CD8-positive, alpha-beta T cell (primary cell): ENCODE measurements at regions of chr13 and their contacts with region 1.

Region 1: GRCh38 chr13:37241786-37242185 is 136.3 kb upstream of the CSNK1A1L start:
- DNase-seq: no peak
- ATAC-seq: no peak
- H3K4me3 ChIP-seq: no peak overlapping the region
- H3K4me3 Mint-ChIP-seq: no peak overlapping the region
- H3K27ac ChIP-seq: no peak overlapping the region
- H3K27ac Mint-ChIP-seq: no peak overlapping the region
- H3K4me1 ChIP-seq: no peaks in the 10 kb centered on the region
- H3K4me1 Mint-ChIP-seq: no peaks in the 10 kb centered on the region
- H3K27me3 ChIP-seq: no peaks in the 10 kb centered on the region
- H3K27me3 Mint-ChIP-seq: no peaks in the 10 kb centered on the region
- CTCF ChIP-seq: no peak

Region 2: GRCh38 chr13:37187105-37187504 is 54.7 kb before region 1 on chr13:
- CTCF ChIA-PET with region 1: no interaction called
- POLR2A ChIA-PET with region 1: no interaction called
- intact Hi-C with region 1: loop called in 1 of 2 experiments (anchors 2 kb)
- DNase-seq: no peak
- ATAC-seq: no peak
- H3K4me3 ChIP-seq: no peak overlapping the region
- H3K4me3 Mint-ChIP-seq: no peak overlapping the region
- H3K27ac ChIP-seq: no peak overlapping the region
- H3K27ac Mint-ChIP-seq: no peak overlapping the region
- H3K4me1 ChIP-seq: no peaks in the 10 kb centered on the region
- H3K4me1 Mint-ChIP-seq: no peaks in the 10 kb centered on the region
- H3K27me3 ChIP-seq: peaks cover 0 to 3% of the 10 kb centered on the region in 2 experiments
- H3K27me3 Mint-ChIP-seq: no peaks in the 10 kb centered on the region
- CTCF ChIP-seq: no peak

Region 3: GRCh38 chr13:37561031-37561430 is 319.2 kb after region 1 on chr13:
- CTCF ChIA-PET with region 1: no interaction called
- POLR2A ChIA-PET with region 1: no interaction called
- intact Hi-C with region 1: loop called in 1 of 2 experiments (anchors 5 kb)
- DNase-seq: no peak
- ATAC-seq: no peak
- H3K4me3 ChIP-seq: no peak overlapping the region
- H3K4me3 Mint-ChIP-seq: no peak overlapping the region
- H3K27ac ChIP-seq: no peak overlapping the region
- H3K27ac Mint-ChIP-seq: no peak overlapping the region
- H3K4me1 ChIP-seq: no peaks in the 10 kb centered on the region
- H3K4me1 Mint-ChIP-seq: no peaks in the 10 kb centered on the region
- H3K27me3 ChIP-seq: no peaks in the 10 kb centered on the region
- H3K27me3 Mint-ChIP-seq: no peaks in the 10 kb centered on the region
- CTCF ChIP-seq: no peak